B cell (primary cell): ENCODE measurements at regions of chr7 and their contacts with region 1.

Region 1: GRCh38 chr7:44847508-44847920 is 373 bp downstream of the H2AZ2 start:
- DNase-seq: peak; percentile 96
- ATAC-seq: peak; percentile 64
- H3K4me3 ChIP-seq: peak overlapping the region; percentile 67 to 97 (median 76)
- H3K4me3 Mint-ChIP-seq: peak overlapping the region; percentile 99
- H3K27ac ChIP-seq: peak overlapping the region; percentile 94
- H3K27ac Mint-ChIP-seq: peak overlapping the region; percentile 100
- H3K4me1 ChIP-seq: peaks cover 16 to 24% of the 10 kb centered on the region in 2 donors
- H3K4me1 Mint-ChIP-seq: peaks cover 31% of the 10 kb centered on the region
- H3K27me3 ChIP-seq: no peaks in the 10 kb centered on the region
- H3K27me3 Mint-ChIP-seq: no peaks in the 10 kb centered on the region
- CTCF ChIP-seq: peak; percentile 89

Region 2: DNA sequence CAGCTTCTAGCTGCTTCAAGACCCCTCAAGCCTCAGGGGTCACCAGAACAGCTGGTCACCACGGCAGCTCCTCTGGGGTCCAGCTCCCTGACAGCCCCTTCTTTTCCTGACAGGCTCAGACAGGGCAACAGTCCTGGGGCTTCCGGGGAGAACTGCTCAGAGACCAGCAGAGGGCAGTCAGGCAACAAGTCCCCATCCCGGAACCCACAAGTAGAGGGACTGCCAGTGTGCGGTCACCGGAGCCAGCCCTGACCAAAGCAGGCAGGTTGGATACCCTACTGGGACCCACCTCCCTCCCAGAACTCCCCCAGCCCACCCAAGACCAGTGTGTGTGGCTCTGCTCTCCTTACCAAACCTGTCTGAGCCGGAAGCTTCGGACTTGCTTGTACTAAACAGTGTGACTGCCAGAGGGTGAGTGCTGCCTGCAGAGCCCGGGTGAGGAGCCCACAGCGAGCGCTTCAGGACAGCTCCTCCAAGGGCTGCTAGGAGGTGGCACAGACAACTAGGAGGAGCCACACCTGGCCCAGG is 606.5 kb before region 1 on chr7:
- CTCF ChIA-PET with region 1: no interaction called
- POLR2A ChIA-PET with region 1: no interaction called
- intact Hi-C with region 1: loop called (anchors 5 kb)
- DNase-seq: peak; percentile 77
- ATAC-seq: peak; percentile 82
- H3K4me3 ChIP-seq: peak overlapping the region in 3 of 5 experiments; percentile 29 to 44 (median 31)
- H3K4me3 Mint-ChIP-seq: peak overlapping the region; percentile 68
- H3K27ac ChIP-seq: no peak overlapping the region
- H3K27ac Mint-ChIP-seq: peak overlapping the region; percentile 26
- H3K4me1 ChIP-seq: peaks cover 3 to 7% of the 10 kb centered on the region in 2 donors
- H3K4me1 Mint-ChIP-seq: peaks cover 3% of the 10 kb centered on the region
- H3K27me3 ChIP-seq: no peaks in the 10 kb centered on the region
- H3K27me3 Mint-ChIP-seq: peaks cover 3% of the 10 kb centered on the region
- CTCF ChIP-seq: peak; percentile 69

Region 3: DNA sequence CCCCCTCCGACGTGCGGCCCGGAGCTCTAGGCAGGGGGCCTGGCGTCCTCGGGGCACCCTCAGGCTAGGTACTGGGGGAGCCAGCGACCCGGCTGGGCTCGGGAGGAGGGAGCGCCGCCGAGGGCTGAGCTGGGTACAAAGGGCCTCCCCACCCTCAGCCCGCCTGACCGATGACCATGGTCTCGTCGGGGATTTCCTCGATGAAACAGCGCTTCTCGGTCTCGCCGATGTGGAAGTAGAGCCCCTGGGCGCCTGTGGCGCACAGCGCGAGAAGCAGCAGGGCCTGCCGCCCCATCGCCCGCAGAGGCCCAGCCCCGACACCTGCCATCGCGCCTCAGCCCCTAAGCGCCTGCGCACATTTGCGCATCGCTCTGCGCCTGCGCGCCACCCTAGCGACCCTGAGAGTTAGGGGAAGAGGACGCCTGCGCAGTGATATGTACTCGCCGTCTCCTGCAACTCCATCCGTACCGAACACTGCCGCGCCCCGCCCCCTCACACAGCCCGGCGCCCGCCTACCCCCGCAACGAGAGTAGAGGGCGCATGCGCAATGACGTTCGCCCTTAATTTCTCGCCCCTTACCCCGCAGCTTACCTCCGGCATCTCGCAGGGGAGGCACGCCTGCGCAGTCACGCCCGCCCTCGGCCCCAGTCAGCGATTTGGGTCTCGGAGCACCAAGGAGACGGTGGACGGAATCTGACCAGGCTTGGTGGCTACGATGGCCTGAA is 265.5 kb before region 1 on chr7 and contains the start of gene TMED4:
- CTCF ChIA-PET with region 1: interaction called, 42 read pairs
- POLR2A ChIA-PET with region 1: interaction called, 10 read pairs
- intact Hi-C with region 1: loop called (anchors 1 kb)
- DNase-seq: peak; percentile 100
- ATAC-seq: peak; percentile 92
- H3K4me3 ChIP-seq: peak within 1 kb of the TSS; percentile 72 to 99 (median 88)
- H3K4me3 Mint-ChIP-seq: peak within 1 kb of the TSS; percentile 96
- H3K27ac ChIP-seq: peak within 1 kb of the TSS; percentile 92 to 97
- H3K27ac Mint-ChIP-seq: peak within 1 kb of the TSS; percentile 99
- H3K4me1 ChIP-seq: peaks cover 21% of the 10 kb centered on the region in 2 donors
- H3K4me1 Mint-ChIP-seq: peaks cover 28% of the 10 kb centered on the region
- H3K27me3 ChIP-seq: no peaks in the 10 kb centered on the region
- H3K27me3 Mint-ChIP-seq: no peaks in the 10 kb centered on the region
- CTCF ChIP-seq: no peak
- total RNA-seq, gene TMED4: 84.0 and 84.1 TPM in 2 replicates

Region 4: DNA sequence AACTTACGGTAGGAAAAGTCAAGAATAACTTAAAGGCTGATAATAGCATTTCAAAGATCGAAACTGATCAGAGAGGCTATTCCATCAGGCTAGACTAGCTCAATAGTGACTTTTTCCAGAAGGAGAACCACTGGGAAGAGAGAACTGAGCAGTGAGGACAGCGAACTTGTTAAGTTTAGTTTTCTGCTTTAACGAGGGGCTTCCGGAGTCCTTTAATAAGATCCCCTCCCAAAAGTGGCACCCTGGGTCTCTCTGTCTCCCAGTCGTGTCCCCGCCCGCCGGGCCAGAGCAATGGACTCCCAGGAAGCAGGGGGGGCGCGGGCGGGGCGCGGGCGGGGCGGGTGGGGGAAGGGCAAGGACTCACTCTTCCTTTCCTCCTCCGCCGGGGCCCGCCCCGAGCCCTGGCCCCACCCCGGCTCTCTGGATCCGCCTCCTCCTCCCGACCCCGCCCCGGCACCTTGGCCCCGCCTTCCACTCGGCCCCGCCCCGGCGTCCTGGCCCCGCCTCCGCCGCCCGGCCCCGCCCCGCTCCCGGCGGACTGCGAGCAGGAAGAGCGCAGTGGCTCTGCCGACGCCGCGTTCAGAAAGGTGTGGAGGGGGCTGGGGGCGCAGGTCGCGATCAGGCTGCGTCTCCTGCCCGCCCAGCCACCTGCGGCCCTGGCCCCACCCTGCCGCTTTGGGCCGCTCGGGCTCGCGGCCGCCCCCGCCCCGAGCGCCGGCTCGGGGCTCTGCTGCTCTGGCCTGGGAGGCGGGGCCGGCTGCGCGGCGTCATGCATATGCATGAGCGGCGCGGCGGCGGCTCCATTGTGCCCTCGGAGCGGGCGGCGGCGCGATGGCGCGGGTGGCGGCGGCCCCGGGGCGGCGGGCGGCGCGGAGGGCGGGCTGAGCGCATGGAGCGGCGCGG is 99.2 kb before region 1 on chr7 and contains the start of gene ZMIZ2:
- CTCF ChIA-PET with region 1: interaction called, 11 read pairs
- POLR2A ChIA-PET with region 1: interaction called, 9 read pairs
- intact Hi-C with region 1: loop called (anchors 1 kb)
- DNase-seq: peak; percentile 96
- ATAC-seq: peak; percentile 80
- H3K4me3 ChIP-seq: peak within 1 kb of the TSS; percentile 61 to 89 (median 74)
- H3K4me3 Mint-ChIP-seq: peak within 1 kb of the TSS; percentile 88
- H3K27ac ChIP-seq: peak within 1 kb of the TSS; percentile 96 to 97
- H3K27ac Mint-ChIP-seq: peak within 1 kb of the TSS; percentile 97
- H3K4me1 ChIP-seq: peaks cover 43 to 48% of the 10 kb centered on the region in 2 donors
- H3K4me1 Mint-ChIP-seq: peaks cover 51% of the 10 kb centered on the region
- H3K27me3 ChIP-seq: no peaks in the 10 kb centered on the region
- H3K27me3 Mint-ChIP-seq: no peaks in the 10 kb centered on the region
- CTCF ChIP-seq: no peak
- total RNA-seq, gene ZMIZ2: 442 and 446 TPM in 2 replicates

Region 5: DNA sequence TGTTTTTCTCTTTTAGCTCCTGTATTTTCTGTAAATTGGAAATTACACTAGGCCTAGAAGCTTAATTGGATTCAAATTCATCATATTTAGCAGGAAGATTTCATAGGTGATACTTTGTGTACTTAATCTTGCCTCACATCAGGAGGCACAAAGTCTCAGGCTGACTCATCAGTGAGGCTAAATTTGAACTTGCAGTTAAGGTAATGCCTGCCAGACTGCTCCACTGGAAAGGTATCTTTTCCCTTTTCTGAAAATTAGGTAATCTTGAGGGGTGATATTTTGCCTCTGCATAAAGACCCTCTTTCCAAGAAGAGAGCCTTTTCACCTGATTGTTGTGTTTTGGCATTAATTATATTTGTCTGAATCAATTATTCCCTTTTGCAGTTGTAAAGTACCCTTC is 36.4 kb before region 1 on chr7:
- CTCF ChIA-PET with region 1: no interaction called
- POLR2A ChIA-PET with region 1: no interaction called
- intact Hi-C with region 1: no loop called
- DNase-seq: no peak
- ATAC-seq: no peak
- H3K4me3 ChIP-seq: no peak overlapping the region
- H3K4me3 Mint-ChIP-seq: no peak overlapping the region
- H3K27ac ChIP-seq: no peak overlapping the region
- H3K27ac Mint-ChIP-seq: no peak overlapping the region
- H3K4me1 ChIP-seq: no peaks in the 10 kb centered on the region
- H3K4me1 Mint-ChIP-seq: no peaks in the 10 kb centered on the region
- H3K27me3 ChIP-seq: no peaks in the 10 kb centered on the region
- H3K27me3 Mint-ChIP-seq: no peaks in the 10 kb centered on the region
- CTCF ChIP-seq: no peak

Region 6: GRCh38 chr7:44885394-44886317 is 38.1 kb after region 1 on chr7 and contains the start of gene PURB:
- CTCF ChIA-PET with region 1: interaction called, 8 read pairs
- POLR2A ChIA-PET with region 1: interaction called, 7 read pairs
- intact Hi-C with region 1: loop called (anchors 1 kb)
- DNase-seq: peak; percentile 99
- ATAC-seq: peak; percentile 83
- H3K4me3 ChIP-seq: peak within 1 kb of the TSS; percentile 78 to 83 (median 81)
- H3K4me3 Mint-ChIP-seq: peak within 1 kb of the TSS; percentile 96
- H3K27ac ChIP-seq: peak within 1 kb of the TSS; percentile 96 to 99
- H3K27ac Mint-ChIP-seq: peak within 1 kb of the TSS; percentile 100
- H3K4me1 ChIP-seq: peaks cover 41 to 49% of the 10 kb centered on the region in 2 donors
- H3K4me1 Mint-ChIP-seq: peaks cover 47% of the 10 kb centered on the region
- H3K27me3 ChIP-seq: no peaks in the 10 kb centered on the region
- H3K27me3 Mint-ChIP-seq: no peaks in the 10 kb centered on the region
- CTCF ChIP-seq: no peak
- total RNA-seq, gene PURB: 28.6 and 29.1 TPM in 2 replicates

Region 7: DNA sequence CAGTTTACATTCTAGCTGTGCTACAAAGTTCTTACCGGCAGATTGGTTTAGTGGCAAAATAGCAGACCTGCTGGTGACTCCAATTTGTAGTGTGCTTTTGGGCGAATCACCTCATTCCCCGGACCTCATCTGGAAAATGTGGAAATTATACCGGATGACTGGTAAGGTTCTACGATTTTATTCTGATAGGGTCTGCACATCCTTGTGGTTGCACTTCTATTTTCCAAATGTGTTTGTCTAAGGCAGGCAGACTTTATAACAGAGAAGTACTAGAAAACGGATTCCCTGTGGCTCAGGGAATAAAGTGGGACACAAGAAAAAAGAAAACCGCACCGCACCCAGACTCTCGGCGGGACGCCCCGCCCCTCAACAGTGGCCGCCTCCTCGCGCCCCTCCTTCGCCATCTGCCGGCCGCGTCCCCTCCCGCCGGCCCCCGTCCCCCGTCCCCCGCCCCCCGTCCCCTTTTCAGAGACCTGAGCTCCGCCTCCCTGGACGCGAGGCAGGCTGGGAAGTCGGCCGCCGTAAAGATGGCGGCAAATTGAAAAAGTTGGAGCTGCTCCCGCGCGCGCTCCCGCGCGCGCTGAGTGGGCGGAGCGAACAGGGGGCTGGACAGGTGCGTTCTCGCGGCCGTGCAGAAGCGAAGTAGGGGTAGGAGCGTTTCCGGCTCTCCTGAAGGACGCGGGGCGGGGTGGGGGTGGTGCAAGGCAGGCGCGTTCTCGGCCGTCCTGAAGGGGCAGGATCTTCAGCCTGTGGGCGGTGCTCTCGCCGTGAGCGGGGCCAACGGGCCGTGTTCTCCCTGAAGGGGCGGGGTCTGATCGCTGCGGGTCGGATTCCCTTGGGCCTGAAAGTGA is 152.0 kb after region 1 on chr7:
- CTCF ChIA-PET with region 1: interaction called, 4 read pairs
- POLR2A ChIA-PET with region 1: no interaction called
- intact Hi-C with region 1: loop called (anchors 5 kb)
- DNase-seq: peak; percentile 100
- ATAC-seq: peak; percentile 84
- H3K4me3 ChIP-seq: peak overlapping the region; percentile 40 to 99 (median 76)
- H3K4me3 Mint-ChIP-seq: peak overlapping the region; percentile 99
- H3K27ac ChIP-seq: peak overlapping the region; percentile 65 to 72
- H3K27ac Mint-ChIP-seq: peak overlapping the region; percentile 98
- H3K4me1 ChIP-seq: peaks cover 36 to 50% of the 10 kb centered on the region in 2 donors
- H3K4me1 Mint-ChIP-seq: peaks cover 57% of the 10 kb centered on the region
- H3K27me3 ChIP-seq: no peaks in the 10 kb centered on the region
- H3K27me3 Mint-ChIP-seq: no peaks in the 10 kb centered on the region
- CTCF ChIP-seq: no peak

Region 8: GRCh38 chr7:45013465-45013967 is 166.0 kb after region 1 on chr7:
- CTCF ChIA-PET with region 1: no interaction called
- POLR2A ChIA-PET with region 1: no interaction called
- intact Hi-C with region 1: no loop called
- DNase-seq: no peak
- ATAC-seq: no peak
- H3K4me3 ChIP-seq: no peak overlapping the region
- H3K4me3 Mint-ChIP-seq: no peak overlapping the region
- H3K27ac ChIP-seq: peak overlapping the region in 1 of 2 donors; percentile 9
- H3K27ac Mint-ChIP-seq: no peak overlapping the region
- H3K4me1 ChIP-seq: no peaks in the 10 kb centered on the region
- H3K4me1 Mint-ChIP-seq: peaks cover 16% of the 10 kb centered on the region
- H3K27me3 ChIP-seq: no peaks in the 10 kb centered on the region
- H3K27me3 Mint-ChIP-seq: no peaks in the 10 kb centered on the region
- CTCF ChIP-seq: no peak

Region 9: DNA sequence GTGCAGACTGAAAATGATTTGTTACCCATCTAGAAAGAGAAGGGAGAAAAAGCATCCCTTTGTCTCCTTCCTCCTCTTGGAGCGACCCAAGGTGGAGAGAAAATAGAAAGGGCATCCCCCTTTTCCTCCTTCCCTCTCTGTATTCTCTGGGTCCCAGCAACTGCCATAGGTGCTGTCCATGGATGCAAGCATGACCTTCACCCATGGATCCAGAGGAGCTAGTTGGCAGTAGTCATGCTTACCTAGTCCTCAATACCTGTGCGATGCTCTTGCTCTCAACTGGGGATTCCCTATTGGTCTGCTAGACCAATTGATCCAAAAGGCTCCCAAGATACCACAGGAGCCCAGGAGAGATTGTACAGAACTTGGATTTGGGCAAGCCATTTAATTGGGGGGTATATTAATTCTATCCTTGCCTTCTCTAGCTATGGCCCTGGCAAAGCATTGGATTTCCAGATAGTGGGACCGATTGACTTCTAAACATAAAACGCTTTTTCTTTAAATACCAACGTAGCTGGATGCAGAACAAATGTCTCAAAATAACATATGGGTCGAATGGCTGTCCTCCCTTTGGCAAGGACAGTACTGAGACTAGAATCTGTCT is 1621.3 kb after region 1 on chr7:
- CTCF ChIA-PET with region 1: no interaction called
- POLR2A ChIA-PET with region 1: no interaction called
- intact Hi-C with region 1: no loop called
- DNase-seq: peak; percentile 23
- ATAC-seq: no peak
- H3K4me3 ChIP-seq: no peak overlapping the region
- H3K4me3 Mint-ChIP-seq: no peak overlapping the region
- H3K27ac ChIP-seq: no peak overlapping the region
- H3K27ac Mint-ChIP-seq: no peak overlapping the region
- H3K4me1 ChIP-seq: no peaks in the 10 kb centered on the region
- H3K4me1 Mint-ChIP-seq: no peaks in the 10 kb centered on the region
- H3K27me3 ChIP-seq: no peaks in the 10 kb centered on the region
- H3K27me3 Mint-ChIP-seq: no peaks in the 10 kb centered on the region
- CTCF ChIP-seq: no peak